Caco-2 (cell line): ENCODE measurements at regions of chr1 and their contacts with region 1.

Region 1: GRCh38 chr1:161098210-161099068 is at the start of gene KLHDC9:
- DNase-seq: peak; percentile 88 to 92
- H3K4me3 ChIP-seq: peak within 1 kb of the TSS; percentile 60
- H3K4me3 Mint-ChIP-seq: peak within 1 kb of the TSS; percentile 70
- H3K27ac Mint-ChIP-seq: peak within 1 kb of the TSS; percentile 82
- H3K4me1 ChIP-seq: no peaks in the 10 kb centered on the region
- H3K4me1 Mint-ChIP-seq: peaks cover 16% of the 10 kb centered on the region
- H3K27me3 ChIP-seq: no peaks in the 10 kb centered on the region
- H3K27me3 Mint-ChIP-seq: no peaks in the 10 kb centered on the region
- CTCF ChIP-seq: peak in 1 of 2 experiments; percentile 26
- total RNA-seq, gene KLHDC9: 2.0 and 2.2 TPM in 2 replicates

Region 2: GRCh38 chr1:161021165-161021960 is 77.1 kb before region 1 on chr1:
- CTCF ChIA-PET with region 1: interaction called, 11 read pairs
- POLR2A ChIA-PET with region 1: interaction called, 7 read pairs
- intact Hi-C with region 1: no loop called
- DNase-seq: peak; percentile 99 to 100
- H3K4me3 ChIP-seq: peak overlapping the region; percentile 67
- H3K4me3 Mint-ChIP-seq: peak overlapping the region; percentile 89
- H3K27ac Mint-ChIP-seq: peak overlapping the region; percentile 97
- H3K4me1 ChIP-seq: peaks cover 38% of the 10 kb centered on the region
- H3K4me1 Mint-ChIP-seq: peaks cover 50% of the 10 kb centered on the region
- H3K27me3 ChIP-seq: no peaks in the 10 kb centered on the region
- H3K27me3 Mint-ChIP-seq: no peaks in the 10 kb centered on the region
- CTCF ChIP-seq: no peak

Region 3: DNA sequence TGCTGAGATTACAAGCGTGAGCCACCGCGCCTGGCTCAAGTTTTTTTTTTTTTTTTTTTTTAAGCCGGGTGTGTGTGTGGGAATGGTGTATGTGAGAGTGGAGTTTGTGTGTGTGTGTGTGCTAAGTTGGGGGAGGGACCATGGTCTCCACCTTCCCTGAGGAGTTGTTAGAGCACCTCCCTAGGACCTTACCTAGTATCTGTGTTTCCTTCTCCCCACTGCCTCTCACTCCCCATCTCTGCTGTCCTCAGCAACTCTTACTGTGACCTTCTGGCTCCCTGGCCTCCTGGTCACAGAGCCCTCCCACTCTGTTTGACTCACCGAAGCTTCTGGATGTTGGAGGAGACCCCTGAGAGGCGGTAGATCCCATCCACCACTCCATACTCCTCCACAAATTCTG is 39.1 kb before region 1 on chr1:
- CTCF ChIA-PET with region 1: no interaction called
- POLR2A ChIA-PET with region 1: no interaction called
- intact Hi-C with region 1: loop called (anchors 5 kb)
- DNase-seq: no peak
- H3K4me3 ChIP-seq: no peak overlapping the region
- H3K4me3 Mint-ChIP-seq: no peak overlapping the region
- H3K27ac Mint-ChIP-seq: no peak overlapping the region
- H3K4me1 ChIP-seq: no peaks in the 10 kb centered on the region
- H3K4me1 Mint-ChIP-seq: no peaks in the 10 kb centered on the region
- H3K27me3 ChIP-seq: no peaks in the 10 kb centered on the region
- H3K27me3 Mint-ChIP-seq: no peaks in the 10 kb centered on the region
- CTCF ChIP-seq: no peak

Region 4: GRCh38 chr1:161082991-161083742 is 15.3 kb before region 1 on chr1:
- CTCF ChIA-PET with region 1: interaction called, 15 read pairs
- POLR2A ChIA-PET with region 1: no interaction called
- intact Hi-C with region 1: no loop called
- DNase-seq: peak; percentile 92 to 95
- H3K4me3 ChIP-seq: no peak overlapping the region
- H3K4me3 Mint-ChIP-seq: peak overlapping the region; percentile 9
- H3K27ac Mint-ChIP-seq: peak overlapping the region; percentile 67
- H3K4me1 ChIP-seq: peaks cover 43% of the 10 kb centered on the region
- H3K4me1 Mint-ChIP-seq: peaks cover 37% of the 10 kb centered on the region
- H3K27me3 ChIP-seq: no peaks in the 10 kb centered on the region
- H3K27me3 Mint-ChIP-seq: no peaks in the 10 kb centered on the region
- CTCF ChIP-seq: no peak

Region 5: GRCh38 chr1:161314201-161314981 is 216.0 kb after region 1 on chr1 and contains the start of gene SDHC:
- CTCF ChIA-PET with region 1: no interaction called
- POLR2A ChIA-PET with region 1: no interaction called
- intact Hi-C with region 1: no loop called
- DNase-seq: peak; percentile 88 to 92
- H3K4me3 ChIP-seq: peak within 1 kb of the TSS; percentile 66
- H3K4me3 Mint-ChIP-seq: peak within 1 kb of the TSS; percentile 91
- H3K27ac Mint-ChIP-seq: peak within 1 kb of the TSS; percentile 94
- H3K4me1 ChIP-seq: peaks cover 4% of the 10 kb centered on the region; the same call in 1 of the 2 replicates
- H3K4me1 Mint-ChIP-seq: no peaks in the 10 kb centered on the region
- H3K27me3 ChIP-seq: no peaks in the 10 kb centered on the region
- H3K27me3 Mint-ChIP-seq: no peaks in the 10 kb centered on the region
- CTCF ChIP-seq: peak; percentile 15 to 63
- total RNA-seq, gene SDHC: 261 and 268 TPM in 2 replicates